MCF 10A (cell line): ENCODE measurements at regions of chr4 and their contacts with region 1.

Region 1: GRCh38 chr4:150297861-150298474 is 219.7 kb downstream of the DCLK2 start:
- DNase-seq: peak; percentile 69
- H3K4me3 Mint-ChIP-seq: no peak overlapping the region
- H3K27ac Mint-ChIP-seq: no peak overlapping the region
- H3K4me1 Mint-ChIP-seq: no peaks in the 10 kb centered on the region
- H3K27me3 Mint-ChIP-seq: no peaks in the 10 kb centered on the region
- CTCF ChIP-seq: peak; percentile 60

Region 2: GRCh38 chr4:150593996-150594395 is 296.0 kb after region 1 on chr4:
- CTCF ChIA-PET with region 1: no interaction called
- POLR2A ChIA-PET with region 1: no interaction called
- intact Hi-C with region 1: loop called (anchors 1 kb)
- DNase-seq: no peak
- H3K4me3 Mint-ChIP-seq: no peak overlapping the region
- H3K27ac Mint-ChIP-seq: no peak overlapping the region
- H3K4me1 Mint-ChIP-seq: no peaks in the 10 kb centered on the region
- H3K27me3 Mint-ChIP-seq: no peaks in the 10 kb centered on the region
- CTCF ChIP-seq: peak; percentile 18